Motor neuron (in vitro differentiated cells): ENCODE measurements at regions of chr9 and their contacts with region 1.

Region 1: DNA sequence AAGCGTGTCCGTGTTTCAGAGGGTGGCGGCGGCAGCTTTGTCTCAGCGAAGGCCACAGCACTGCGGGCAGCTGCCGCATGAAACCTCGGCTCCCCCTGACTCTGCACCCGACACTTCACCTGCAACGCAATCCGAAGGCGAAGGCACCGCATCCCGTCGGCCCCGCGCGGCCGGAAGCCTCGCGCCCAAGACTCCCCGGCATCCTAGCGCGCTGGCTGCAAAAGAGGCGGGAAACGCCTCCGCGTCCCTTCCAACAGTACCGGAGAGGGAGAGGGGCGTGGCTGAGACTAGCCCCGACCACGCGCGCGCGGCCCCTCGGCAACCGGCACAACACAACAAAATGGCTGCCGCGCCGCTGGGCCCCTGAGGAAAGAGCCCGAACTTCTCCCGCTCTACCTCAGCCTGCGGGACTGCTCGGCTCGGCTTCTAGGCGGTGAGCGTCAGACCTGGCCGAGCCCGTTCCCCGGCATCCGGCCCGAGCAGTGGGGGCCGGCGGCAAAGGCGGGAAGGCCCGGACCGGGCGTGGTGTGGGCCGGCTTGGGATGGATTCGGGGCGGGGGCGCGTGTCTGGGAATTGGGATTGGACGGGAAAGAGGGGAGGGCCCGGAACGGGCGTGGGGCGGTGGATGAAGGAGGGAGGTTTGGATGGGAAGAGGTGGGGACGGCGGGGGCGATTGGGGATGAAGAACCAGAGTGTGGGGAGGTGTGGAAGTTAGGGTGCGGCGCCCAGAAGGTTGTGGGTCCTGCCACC is at the start of gene CNTRL:
- ATAC-seq: peak; percentile 75 to 97 (median 96)
- H3K4me3 ChIP-seq: peak within 1 kb of the TSS; percentile 70 to 98 (median 89)
- H3K27ac ChIP-seq: peak within 1 kb of the TSS; percentile 90 to 94
- H3K4me1 ChIP-seq: peaks cover 7 to 12% of the 10 kb centered on the region in 2 donors
- total RNA-seq, gene CNTRL: 3.1 to 19.8 (median 13.8) TPM

Region 2: GRCh38 chr9:120742951-120743416 is 331.8 kb before region 1 on chr9:
- in situ Hi-C with region 1: loop called in 1 of 9 experiments (anchors 25 kb)
- ATAC-seq: peak in 5 of 8 experiments; percentile 30 to 98 (median 92)
- H3K4me3 ChIP-seq: no peak overlapping the region
- H3K27ac ChIP-seq: no peak overlapping the region
- H3K4me1 ChIP-seq: no peaks in the 10 kb centered on the region

Region 3: DNA sequence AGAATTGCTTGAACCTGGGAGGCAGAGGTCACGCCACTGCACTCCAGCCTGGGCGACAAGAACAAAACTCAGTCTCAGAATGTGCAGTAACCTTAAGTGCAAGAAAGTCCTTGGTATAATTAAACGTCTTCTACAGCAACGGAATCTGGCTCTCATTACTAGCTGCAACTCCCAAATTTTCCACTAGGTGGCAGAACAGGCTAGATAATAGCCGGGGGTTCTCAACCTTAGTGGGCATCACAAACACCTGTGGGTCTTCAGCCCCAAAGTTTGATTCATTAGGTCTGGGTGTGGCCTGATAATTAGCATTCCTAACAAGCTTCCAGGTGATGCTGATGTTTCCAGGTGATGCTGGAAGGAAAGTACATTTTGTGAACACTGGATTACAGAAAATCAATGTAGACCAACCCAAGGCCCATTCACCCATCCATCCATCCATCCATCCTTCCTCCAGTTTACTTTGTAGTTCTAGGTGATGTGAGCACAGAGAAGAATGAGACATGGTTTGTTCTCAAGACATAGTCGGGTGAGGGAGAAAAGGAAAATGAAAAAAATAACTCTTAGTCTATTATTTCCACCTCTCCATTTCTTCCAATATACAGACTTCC is 318.9 kb before region 1 on chr9:
- in situ Hi-C with region 1: loop called in 4 of 9 experiments (anchors 25 kb)
- ATAC-seq: peak in 6 of 8 experiments; percentile 43 to 74 (median 58)
- H3K4me3 ChIP-seq: no peak overlapping the region
- H3K27ac ChIP-seq: no peak overlapping the region
- H3K4me1 ChIP-seq: no peaks in the 10 kb centered on the region